Mammary epithelial cell (primary cell): ENCODE measurements at regions of chr12 and their contacts with region 1.

Region 1: GRCh38 chr12:101552277-101552676 is 42.5 kb upstream of the MYBPC1 start:
- DNase-seq: peak; percentile 5
- H3K4me3 ChIP-seq: no peak overlapping the region
- H3K27ac ChIP-seq: no peak overlapping the region
- H3K4me1 ChIP-seq: no peaks in the 10 kb centered on the region
- H3K27me3 ChIP-seq: no peaks in the 10 kb centered on the region
- CTCF ChIP-seq: no peak

Region 2: GRCh38 chr12:101485021-101485420 is 67.3 kb before region 1 on chr12:
- CTCF ChIA-PET with region 1: no interaction called
- dilution Hi-C with region 1: loop called (anchors 10 kb)
- in situ Hi-C with region 1: no loop called
- intact Hi-C with region 1: no loop called
- DNase-seq: no peak
- H3K4me3 ChIP-seq: no peak overlapping the region
- H3K27ac ChIP-seq: no peak overlapping the region
- H3K4me1 ChIP-seq: no peaks in the 10 kb centered on the region
- H3K27me3 ChIP-seq: no peaks in the 10 kb centered on the region
- CTCF ChIP-seq: no peak